ENCODE measurements at regions of chr2 and their contacts with region 1.

Region 1: DNA sequence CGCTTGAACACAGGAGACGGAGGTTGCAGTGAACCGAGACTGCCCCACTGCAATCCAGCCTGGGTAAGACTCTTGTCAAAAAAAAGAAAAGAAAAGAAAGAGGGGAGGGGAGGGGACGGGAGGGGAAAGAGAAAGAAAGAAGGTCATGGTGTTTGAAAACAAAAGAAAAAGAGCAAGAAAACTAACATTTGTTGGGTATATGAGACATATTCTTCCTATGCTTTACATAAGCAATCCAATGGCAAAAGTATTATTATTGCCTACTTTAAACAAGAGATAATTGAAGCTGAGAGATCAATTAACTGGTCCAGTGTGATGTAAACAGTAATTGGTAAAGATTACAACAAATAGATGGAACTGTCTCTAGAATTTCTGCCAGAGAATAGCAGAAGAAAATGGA is 157.3 kb downstream of the ZRANB3 start:
- DNase-seq: no peak
- H3K4me3 ChIP-seq: no peak overlapping the region
- CTCF ChIP-seq: no peak
- POLR2A ChIP-seq: no peak

Region 2: DNA sequence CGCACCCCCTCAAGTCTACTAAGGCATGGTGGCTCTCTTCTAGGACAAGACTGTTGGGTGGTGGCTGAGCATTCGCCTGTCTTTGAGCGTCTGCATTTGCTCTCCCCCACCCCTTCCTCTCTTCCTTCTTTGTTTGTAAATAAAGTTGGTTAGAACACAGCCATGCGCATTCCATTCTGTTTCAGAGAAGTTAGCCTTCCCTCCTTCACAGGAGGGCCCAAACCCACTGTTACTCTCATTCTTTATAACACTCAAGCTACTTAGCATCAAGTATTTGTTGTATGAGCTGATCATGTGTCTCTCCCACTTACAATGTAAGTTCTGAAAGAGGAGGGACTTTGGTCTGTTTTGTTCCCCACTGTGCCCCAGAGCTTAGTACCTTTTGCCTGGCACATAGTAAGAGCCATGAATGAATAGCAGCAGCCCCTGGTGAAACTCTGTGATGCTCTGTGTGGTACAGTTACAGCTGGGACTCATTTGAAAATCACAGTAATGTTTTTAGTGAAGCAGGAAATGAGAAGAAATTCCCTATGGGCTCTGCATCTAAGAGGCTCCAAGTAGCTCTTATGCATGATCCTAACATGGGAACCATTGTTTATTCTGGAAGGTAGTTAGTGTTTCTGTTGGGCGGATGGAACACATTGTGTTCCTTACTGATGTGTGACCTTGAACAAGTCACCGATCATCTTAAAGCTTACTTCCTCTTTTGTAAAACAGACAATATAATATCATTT is 1112.1 kb before region 1 on chr2:
- intact Hi-C with region 1: no loop called
- DNase-seq: no peak
- H3K4me3 ChIP-seq: no peak overlapping the region
- CTCF ChIP-seq: no peak
- POLR2A ChIP-seq: no peak

Region 3: DNA sequence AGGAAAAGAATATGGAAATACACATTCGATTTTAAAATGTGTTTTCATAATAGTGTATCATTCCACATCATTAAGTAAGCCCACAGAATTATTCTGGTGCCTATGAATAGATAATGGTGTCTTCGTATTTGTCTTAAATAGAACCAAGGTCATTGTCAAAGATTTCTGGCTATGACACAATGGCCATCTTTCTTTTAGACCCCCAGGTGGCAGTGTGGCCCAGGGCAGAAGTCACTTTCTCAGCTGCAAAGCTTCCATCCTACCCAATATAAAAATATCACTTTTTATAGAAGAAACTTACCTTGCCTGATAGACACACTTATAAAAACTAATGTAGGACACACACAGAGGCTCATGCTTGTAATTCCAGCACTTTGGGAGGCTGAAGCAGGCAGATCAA is 99.9 kb after region 1 on chr2:
- intact Hi-C with region 1: no loop called
- DNase-seq: no peak
- H3K4me3 ChIP-seq: no peak overlapping the region
- CTCF ChIP-seq: no peak
- POLR2A ChIP-seq: no peak

Region 4: GRCh38 chr2:136384531-136385303 is 1011.0 kb after region 1 on chr2:
- intact Hi-C with region 1: loop called (anchors 5 kb)
- DNase-seq: no peak
- H3K4me3 ChIP-seq: no peak overlapping the region
- CTCF ChIP-seq: no peak
- POLR2A ChIP-seq: no peak